Activated B cell treated with CpG ODN at 0.5 μM for 24 hours (primary cell): ENCODE measurements at regions of chr14 and their contacts with region 1.

Region 1: DNA sequence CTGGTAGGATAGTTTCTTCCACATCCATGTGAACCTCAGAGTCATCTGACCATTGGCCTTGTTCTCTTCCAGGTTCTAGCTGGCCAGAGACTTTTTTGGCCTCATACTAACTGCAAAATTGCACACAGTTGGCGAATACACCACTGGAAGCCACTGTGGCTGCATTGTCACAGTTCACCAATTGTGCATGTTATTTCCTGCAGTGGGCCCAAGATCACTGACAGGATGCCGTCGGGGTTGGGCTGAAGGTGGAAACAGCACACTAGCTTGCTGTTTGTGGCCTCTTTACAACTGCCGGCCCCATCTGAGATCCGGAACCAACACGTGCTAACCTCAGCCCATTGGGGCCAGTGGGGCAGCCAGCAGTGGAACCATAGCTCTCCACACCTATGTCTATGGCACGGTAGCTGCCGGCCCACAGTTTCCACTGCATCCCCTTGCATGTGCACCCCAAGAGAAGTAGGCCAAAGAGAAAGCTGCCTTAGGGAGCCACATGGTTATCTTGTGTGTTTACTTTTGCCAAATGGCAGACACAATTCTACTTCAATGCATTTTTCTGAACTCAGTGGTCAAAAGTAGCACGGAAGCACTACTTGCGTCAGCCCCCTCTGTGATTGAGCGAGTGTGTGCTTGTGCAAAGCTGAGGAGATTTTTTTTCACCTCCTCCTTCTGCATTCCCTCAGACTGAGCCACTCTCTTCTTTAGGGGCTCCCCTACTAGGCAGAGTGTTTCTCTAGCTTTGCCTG is 464.0 kb downstream of the RAD51B start:
- DNase-seq: peak; percentile 61
- ATAC-seq: peak; percentile 60
- H3K4me3 Mint-ChIP-seq: peak overlapping the region; percentile 58
- H3K27ac Mint-ChIP-seq: peak overlapping the region; percentile 99
- H3K4me1 Mint-ChIP-seq: peaks cover 97% of the 10 kb centered on the region
- H3K27me3 Mint-ChIP-seq: no peaks in the 10 kb centered on the region
- CTCF ChIP-seq: no peak

Region 2: DNA sequence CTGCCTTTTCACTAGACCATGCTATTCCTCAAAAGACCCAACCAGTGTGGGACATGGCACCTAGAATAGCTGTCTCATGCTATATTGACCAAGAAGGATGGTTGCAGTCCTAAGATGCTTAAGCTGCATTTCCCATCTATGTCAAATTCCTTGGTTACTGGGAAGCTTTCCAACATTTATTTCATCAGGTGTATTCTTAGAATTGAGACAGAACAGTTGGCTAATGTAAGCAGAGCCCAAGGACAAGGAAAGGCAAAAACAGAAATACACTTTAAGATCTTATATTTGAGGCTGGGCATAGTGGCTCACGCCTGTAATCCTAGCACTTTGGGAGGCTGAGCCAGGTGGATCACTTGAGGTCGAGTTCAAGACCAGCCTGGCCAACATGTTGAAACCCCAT is 639.1 kb before region 1 on chr14:
- CTCF ChIA-PET with region 1: no interaction called
- POLR2A ChIA-PET with region 1: no interaction called
- intact Hi-C with region 1: no loop called
- DNase-seq: no peak
- ATAC-seq: no peak
- H3K4me3 Mint-ChIP-seq: no peak overlapping the region
- H3K27ac Mint-ChIP-seq: no peak overlapping the region
- H3K4me1 Mint-ChIP-seq: no peaks in the 10 kb centered on the region
- H3K27me3 Mint-ChIP-seq: no peaks in the 10 kb centered on the region
- CTCF ChIP-seq: no peak

Region 3: GRCh38 chr14:68261092-68261842 is 22.3 kb before region 1 on chr14:
- CTCF ChIA-PET with region 1: interaction called, 22 read pairs
- POLR2A ChIA-PET with region 1: interaction called, 375 read pairs
- intact Hi-C with region 1: no loop called
- DNase-seq: no peak
- ATAC-seq: peak; percentile 56
- H3K4me3 Mint-ChIP-seq: peak overlapping the region; percentile 51
- H3K27ac Mint-ChIP-seq: peak overlapping the region; percentile 96
- H3K4me1 Mint-ChIP-seq: peaks cover 81% of the 10 kb centered on the region
- H3K27me3 Mint-ChIP-seq: no peaks in the 10 kb centered on the region
- CTCF ChIP-seq: no peak

Region 4: DNA sequence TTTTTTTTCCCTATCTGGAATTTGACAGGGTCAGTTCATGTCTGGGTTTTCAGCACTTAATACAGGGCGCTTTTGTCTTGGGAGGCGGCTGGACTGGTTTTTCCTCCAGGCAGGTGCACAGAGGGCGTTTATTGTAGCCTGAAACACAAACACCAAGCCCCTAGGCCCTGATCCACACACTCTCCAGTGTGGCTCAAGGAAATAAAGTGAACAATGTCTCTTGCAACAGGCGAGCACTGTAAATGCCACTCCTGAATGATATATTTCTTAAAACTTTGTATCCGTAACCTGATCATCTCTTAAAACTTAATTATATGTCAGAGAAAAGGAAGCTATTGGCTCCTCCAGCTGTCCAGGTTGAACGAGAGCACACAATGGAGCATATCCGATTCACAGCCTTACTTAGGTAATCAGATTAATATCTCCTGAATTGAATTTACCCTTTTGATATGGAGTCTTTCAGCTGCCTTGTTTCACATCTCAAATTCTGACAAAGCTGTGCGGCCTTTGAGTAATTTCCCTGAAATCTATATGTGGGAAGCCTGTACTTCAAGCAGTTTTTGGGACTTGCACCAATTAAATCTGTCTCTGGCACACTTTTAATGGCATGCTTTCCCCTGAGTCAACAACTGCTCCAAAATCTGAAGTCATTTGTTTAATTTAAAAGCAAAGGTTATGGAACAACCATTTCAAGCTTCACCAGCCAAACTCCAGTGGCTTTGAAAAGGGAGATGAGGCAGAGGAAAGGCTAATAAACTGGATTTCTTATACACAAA is 23.7 kb after region 1 on chr14:
- CTCF ChIA-PET with region 1: interaction called, 6 read pairs
- POLR2A ChIA-PET with region 1: interaction called, 251 read pairs
- intact Hi-C with region 1: loop called (anchors 1 kb)
- DNase-seq: no peak
- ATAC-seq: no peak
- H3K4me3 Mint-ChIP-seq: no peak overlapping the region
- H3K27ac Mint-ChIP-seq: peak overlapping the region; percentile 84
- H3K4me1 Mint-ChIP-seq: peaks cover 72% of the 10 kb centered on the region
- H3K27me3 Mint-ChIP-seq: no peaks in the 10 kb centered on the region
- CTCF ChIP-seq: no peak

Region 5: GRCh38 chr14:68363843-68364767 is 80.6 kb after region 1 on chr14:
- CTCF ChIA-PET with region 1: interaction called, 5 read pairs
- POLR2A ChIA-PET with region 1: interaction called, 40 read pairs
- intact Hi-C with region 1: no loop called
- DNase-seq: no peak
- ATAC-seq: no peak
- H3K4me3 Mint-ChIP-seq: no peak overlapping the region
- H3K27ac Mint-ChIP-seq: peak overlapping the region; percentile 91
- H3K4me1 Mint-ChIP-seq: peaks cover 92% of the 10 kb centered on the region
- H3K27me3 Mint-ChIP-seq: no peaks in the 10 kb centered on the region
- CTCF ChIP-seq: no peak

Region 6: GRCh38 chr14:68401855-68402254 is 118.3 kb after region 1 on chr14:
- CTCF ChIA-PET with region 1: interaction called, 12 read pairs
- POLR2A ChIA-PET with region 1: interaction called, 340 read pairs
- intact Hi-C with region 1: loop called (anchors 1 kb)
- DNase-seq: no peak
- ATAC-seq: peak; percentile 59
- H3K4me3 Mint-ChIP-seq: peak overlapping the region; percentile 72
- H3K27ac Mint-ChIP-seq: peak overlapping the region; percentile 92
- H3K4me1 Mint-ChIP-seq: peaks cover 92% of the 10 kb centered on the region
- H3K27me3 Mint-ChIP-seq: no peaks in the 10 kb centered on the region
- CTCF ChIP-seq: no peak

Region 7: GRCh38 chr14:68495101-68496039 is 211.8 kb after region 1 on chr14:
- CTCF ChIA-PET with region 1: no interaction called
- POLR2A ChIA-PET with region 1: interaction called, 38 read pairs
- intact Hi-C with region 1: loop called (anchors 1 kb)
- DNase-seq: no peak
- ATAC-seq: peak; percentile 92
- H3K4me3 Mint-ChIP-seq: peak overlapping the region; percentile 64
- H3K27ac Mint-ChIP-seq: peak overlapping the region; percentile 98
- H3K4me1 Mint-ChIP-seq: peaks cover 84% of the 10 kb centered on the region
- H3K27me3 Mint-ChIP-seq: no peaks in the 10 kb centered on the region
- CTCF ChIP-seq: no peak

Region 8: GRCh38 chr14:68788996-68789820 is 505.7 kb after region 1 on chr14:
- CTCF ChIA-PET with region 1: interaction called, 8 read pairs
- POLR2A ChIA-PET with region 1: interaction called, 361 read pairs
- intact Hi-C with region 1: loop called (anchors 1 kb)
- DNase-seq: peak; percentile 62
- ATAC-seq: no peak
- H3K4me3 Mint-ChIP-seq: peak overlapping the region; percentile 100
- H3K27ac Mint-ChIP-seq: peak overlapping the region; percentile 99
- H3K4me1 Mint-ChIP-seq: peaks cover 54% of the 10 kb centered on the region
- H3K27me3 Mint-ChIP-seq: no peaks in the 10 kb centered on the region
- CTCF ChIP-seq: no peak